ENCODE measurements at regions of chr10 and their contacts with region 1.

Region 1: GRCh38 chr10:73591935-73592699 is 975 bp upstream of the USP54 start:
- DNase-seq: peak; percentile 68
- ATAC-seq: peak; percentile 86
- H3K4me3 Mint-ChIP-seq: peak overlapping the region; percentile 59
- H3K27ac Mint-ChIP-seq: peak overlapping the region; percentile 99
- H3K4me1 Mint-ChIP-seq: peaks cover 49% of the 10 kb centered on the region
- H3K27me3 Mint-ChIP-seq: no peaks in the 10 kb centered on the region
- CTCF ChIP-seq: no peak

Region 2: GRCh38 chr10:73517271-73517877 is 74.7 kb before region 1 on chr10:
- CTCF ChIA-PET with region 1: no interaction called
- POLR2A ChIA-PET with region 1: no interaction called
- DNase-seq: no peak
- ATAC-seq: no peak
- H3K4me3 Mint-ChIP-seq: no peak overlapping the region
- H3K27ac Mint-ChIP-seq: no peak overlapping the region
- H3K4me1 Mint-ChIP-seq: no peaks in the 10 kb centered on the region
- H3K27me3 Mint-ChIP-seq: no peaks in the 10 kb centered on the region
- CTCF ChIP-seq: no peak

Region 3: GRCh38 chr10:73625884-73626752 is 34.0 kb after region 1 on chr10:
- CTCF ChIA-PET with region 1: interaction called, 3 read pairs
- POLR2A ChIA-PET with region 1: interaction called, 10 read pairs
- DNase-seq: peak; percentile 93
- ATAC-seq: peak; percentile 96
- H3K4me3 Mint-ChIP-seq: peak overlapping the region; percentile 97
- H3K27ac Mint-ChIP-seq: peak overlapping the region; percentile 96
- H3K4me1 Mint-ChIP-seq: peaks cover 20% of the 10 kb centered on the region
- H3K27me3 Mint-ChIP-seq: no peaks in the 10 kb centered on the region; the same call in 1 of the 2 replicates
- CTCF ChIP-seq: no peak

Measured in WTC11 (cell line).